AG04450 (cell line): ENCODE measurements at regions of chr3 and their contacts with region 1.

Region 1: DNA sequence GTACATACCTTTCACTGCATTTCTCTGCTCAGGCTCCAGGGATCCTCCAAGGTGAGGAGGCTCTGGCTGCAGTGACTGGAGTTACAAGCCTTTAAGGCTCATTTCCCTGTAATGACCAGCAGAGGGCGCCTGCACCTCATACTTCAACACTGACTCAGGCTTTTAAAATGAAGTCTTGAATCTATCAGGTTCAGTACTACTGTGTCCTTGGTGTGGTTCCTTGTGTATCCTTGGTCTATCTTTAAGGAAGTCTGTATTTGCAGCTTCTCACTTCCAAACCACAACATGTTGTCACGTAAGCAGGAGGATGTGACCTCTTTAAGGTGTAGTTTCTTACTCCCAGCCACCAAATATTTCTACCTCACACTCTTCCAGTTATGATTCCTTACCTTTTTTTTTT is 122.5 kb upstream of the ZBED2 start:
- DNase-seq: peak; percentile 72
- H3K4me3 ChIP-seq: no peak overlapping the region
- H3K27ac ChIP-seq: no peak overlapping the region
- H3K27me3 ChIP-seq: no peaks in the 10 kb centered on the region
- CTCF ChIP-seq: peak; percentile 90

Region 2: GRCh38 chr3:111700054-111700453 is 17.5 kb before region 1 on chr3:
- CTCF ChIA-PET with region 1: interaction called, 36 read pairs
- POLR2A ChIA-PET with region 1: no interaction called
- DNase-seq: no peak
- H3K4me3 ChIP-seq: no peak overlapping the region
- H3K27ac ChIP-seq: no peak overlapping the region
- H3K27me3 ChIP-seq: no peaks in the 10 kb centered on the region
- CTCF ChIP-seq: no peak

Region 3: GRCh38 chr3:111809196-111809595 is 91.6 kb after region 1 on chr3:
- CTCF ChIA-PET with region 1: interaction called, 14 read pairs
- POLR2A ChIA-PET with region 1: no interaction called
- DNase-seq: no peak
- H3K4me3 ChIP-seq: no peak overlapping the region
- H3K27ac ChIP-seq: no peak overlapping the region
- H3K27me3 ChIP-seq: no peaks in the 10 kb centered on the region
- CTCF ChIP-seq: no peak

Region 4: GRCh38 chr3:111936191-111936841 is 218.7 kb after region 1 on chr3:
- CTCF ChIA-PET with region 1: interaction called, 22 read pairs
- POLR2A ChIA-PET with region 1: interaction called, 3 read pairs
- DNase-seq: peak; percentile 53
- H3K4me3 ChIP-seq: no peak overlapping the region
- H3K27ac ChIP-seq: no peak overlapping the region
- H3K27me3 ChIP-seq: no peaks in the 10 kb centered on the region
- CTCF ChIP-seq: no peak

Region 5: GRCh38 chr3:111972891-111973290 is 255.3 kb after region 1 on chr3:
- CTCF ChIA-PET with region 1: interaction called, 276 read pairs
- POLR2A ChIA-PET with region 1: no interaction called
- DNase-seq: no peak
- H3K4me3 ChIP-seq: no peak overlapping the region
- H3K27ac ChIP-seq: no peak overlapping the region
- H3K27me3 ChIP-seq: no peaks in the 10 kb centered on the region
- CTCF ChIP-seq: no peak

Region 6: GRCh38 chr3:112013058-112013783 is 295.6 kb after region 1 on chr3:
- CTCF ChIA-PET with region 1: interaction called, 72 read pairs
- POLR2A ChIA-PET with region 1: no interaction called
- DNase-seq: peak; percentile 55
- H3K4me3 ChIP-seq: no peak overlapping the region
- H3K27ac ChIP-seq: no peak overlapping the region
- H3K27me3 ChIP-seq: no peaks in the 10 kb centered on the region
- CTCF ChIP-seq: peak; percentile 82